Activated CD4-positive, alpha-beta T cell treated with anti-CD3 and anti-CD28 coated beads, Interleukin-2, amount 10 ng/mL, durations not matched to agents 7 days and 5 days (primary cell): ENCODE measurements at regions of chr1 and their contacts with region 1.

Region 1: GRCh38 chr1:175154629-175155472 is 37.7 kb downstream of the KIAA0040 start:
- DNase-seq: peak; percentile 81
- H3K4me3 Mint-ChIP-seq: no peak overlapping the region
- H3K27ac Mint-ChIP-seq: no peak overlapping the region
- H3K4me1 Mint-ChIP-seq: peaks cover 19% of the 10 kb centered on the region
- H3K27me3 Mint-ChIP-seq: peaks cover 34% of the 10 kb centered on the region

Region 2: DNA sequence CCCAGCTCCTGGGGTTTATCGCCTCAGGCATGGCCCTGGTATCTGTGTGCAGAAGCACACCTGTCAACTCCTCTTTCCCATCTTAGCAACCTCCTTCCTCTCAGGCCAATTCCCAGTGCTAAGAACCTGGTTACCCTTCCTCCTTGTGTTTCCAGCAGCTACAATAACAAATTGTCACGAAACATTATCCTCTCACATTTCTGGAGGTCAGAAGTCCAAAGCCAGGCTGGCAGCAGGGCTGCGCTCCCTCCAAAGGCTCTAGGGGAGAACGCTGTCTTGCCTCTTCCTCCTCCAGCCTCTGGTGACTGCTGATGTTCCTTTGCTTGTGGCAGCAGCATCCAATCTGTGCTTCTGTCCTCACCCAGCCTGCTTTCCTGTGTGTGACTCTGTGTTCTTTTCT is 120.9 kb before region 1 on chr1:
- CTCF ChIA-PET with region 1: interaction called, 11 read pairs
- POLR2A ChIA-PET with region 1: no interaction called
- DNase-seq: no peak
- H3K4me3 Mint-ChIP-seq: no peak overlapping the region
- H3K27ac Mint-ChIP-seq: no peak overlapping the region
- H3K4me1 Mint-ChIP-seq: peaks cover 11% of the 10 kb centered on the region
- H3K27me3 Mint-ChIP-seq: no peaks in the 10 kb centered on the region

Region 3: GRCh38 chr1:175169305-175170018 is 14.6 kb after region 1 on chr1:
- CTCF ChIA-PET with region 1: interaction called, 11 read pairs
- POLR2A ChIA-PET with region 1: no interaction called
- DNase-seq: no peak
- H3K4me3 Mint-ChIP-seq: no peak overlapping the region
- H3K27ac Mint-ChIP-seq: peak overlapping the region; percentile 16
- H3K4me1 Mint-ChIP-seq: peaks cover 46% of the 10 kb centered on the region
- H3K27me3 Mint-ChIP-seq: no peaks in the 10 kb centered on the region

Region 4: DNA sequence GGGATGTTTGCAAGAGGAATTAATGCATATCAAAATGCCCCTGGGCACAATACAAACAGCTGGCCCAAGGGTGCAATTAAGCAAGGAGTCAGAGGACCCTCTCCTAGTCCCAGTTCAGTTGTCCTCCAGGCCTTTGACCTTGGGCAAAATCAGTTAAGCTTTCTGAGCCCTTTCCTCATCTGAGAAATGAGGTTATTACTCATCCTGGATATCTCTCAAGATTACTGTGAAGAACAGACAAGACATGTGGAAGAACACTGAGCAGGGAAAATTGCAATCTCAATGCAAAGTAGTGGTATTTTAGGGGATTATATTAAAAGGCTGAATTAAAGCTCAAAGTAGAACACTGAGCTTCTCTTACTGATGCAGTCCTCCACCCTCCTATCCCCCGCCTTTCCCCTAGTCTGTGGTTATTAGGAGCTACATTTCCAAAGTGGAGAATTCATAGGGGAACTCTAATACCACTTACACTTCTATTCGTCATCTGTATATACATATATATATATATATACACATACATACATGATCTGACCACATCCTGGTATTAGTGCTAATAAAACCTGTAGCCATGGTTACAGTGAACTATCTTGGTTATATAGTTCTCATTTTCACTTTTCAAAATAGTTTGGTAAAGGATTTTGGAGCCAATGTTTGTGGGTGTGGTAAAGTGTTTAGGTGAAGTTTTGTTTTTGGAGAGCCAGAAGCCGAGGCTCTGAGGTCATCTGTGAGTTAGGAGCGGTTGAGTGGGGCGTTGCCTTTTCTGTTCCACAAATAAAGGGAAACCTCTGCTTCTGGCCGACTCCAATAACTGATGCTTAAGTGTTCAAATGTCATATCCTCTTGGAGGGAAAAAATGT is 19.7 kb after region 1 on chr1:
- CTCF ChIA-PET with region 1: interaction called, 10 read pairs
- POLR2A ChIA-PET with region 1: no interaction called
- DNase-seq: no peak
- H3K4me3 Mint-ChIP-seq: no peak overlapping the region
- H3K27ac Mint-ChIP-seq: no peak overlapping the region
- H3K4me1 Mint-ChIP-seq: peaks cover 67% of the 10 kb centered on the region
- H3K27me3 Mint-ChIP-seq: no peaks in the 10 kb centered on the region

Region 5: GRCh38 chr1:175188936-175189335 is 34.1 kb after region 1 on chr1:
- CTCF ChIA-PET with region 1: interaction called, 12 read pairs
- POLR2A ChIA-PET with region 1: interaction called, 4 read pairs
- DNase-seq: peak; percentile 68
- H3K4me3 Mint-ChIP-seq: peak overlapping the region; percentile 92
- H3K27ac Mint-ChIP-seq: peak overlapping the region; percentile 91
- H3K4me1 Mint-ChIP-seq: peaks cover 79% of the 10 kb centered on the region
- H3K27me3 Mint-ChIP-seq: no peaks in the 10 kb centered on the region

Region 6: GRCh38 chr1:175278737-175279122 is 123.9 kb after region 1 on chr1:
- CTCF ChIA-PET with region 1: no interaction called
- POLR2A ChIA-PET with region 1: no interaction called
- DNase-seq: no peak
- H3K4me3 Mint-ChIP-seq: no peak overlapping the region
- H3K27ac Mint-ChIP-seq: no peak overlapping the region
- H3K4me1 Mint-ChIP-seq: peaks cover 6% of the 10 kb centered on the region
- H3K27me3 Mint-ChIP-seq: peaks cover 4% of the 10 kb centered on the region

Region 7: DNA sequence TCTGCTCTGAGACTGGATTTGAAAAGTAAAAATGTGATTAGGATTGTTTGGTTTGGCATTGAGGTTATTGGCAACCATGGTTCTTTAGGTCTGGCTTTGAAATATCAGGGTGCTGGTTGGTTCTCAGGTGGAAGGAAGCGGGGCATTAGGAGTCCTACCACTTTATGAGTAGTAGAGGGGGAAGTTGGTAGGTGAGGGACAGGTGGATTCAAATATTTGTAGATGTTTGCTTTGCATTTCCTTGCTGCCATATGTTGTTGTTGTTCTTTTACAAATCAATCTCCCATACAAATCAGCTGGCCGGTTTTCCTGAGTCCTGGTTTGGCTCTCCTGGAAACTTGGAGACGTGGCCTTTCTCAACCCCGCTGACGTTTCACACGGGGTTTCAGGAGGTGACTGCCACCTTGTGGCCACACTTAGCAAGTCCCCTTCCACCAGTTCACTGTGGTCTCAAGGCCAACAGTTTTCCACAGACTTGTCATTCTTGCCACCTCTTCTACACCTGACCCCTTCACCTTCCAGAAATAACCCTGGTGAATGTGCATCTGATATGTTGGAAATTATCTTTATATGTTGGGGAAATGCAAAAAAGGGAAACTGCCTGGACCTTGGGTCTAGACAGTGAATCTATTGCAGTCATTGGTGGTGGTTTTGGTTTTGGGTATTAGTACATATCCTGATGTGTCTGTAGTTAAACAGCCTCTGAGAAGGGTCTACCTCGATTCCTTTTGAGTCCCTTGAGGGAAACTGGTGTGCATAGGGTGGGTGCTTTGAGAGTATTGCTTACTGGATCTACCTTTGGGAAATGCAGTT is 164.8 kb after region 1 on chr1:
- CTCF ChIA-PET with region 1: interaction called, 55 read pairs
- POLR2A ChIA-PET with region 1: no interaction called
- DNase-seq: peak; percentile 74
- H3K4me3 Mint-ChIP-seq: no peak overlapping the region
- H3K27ac Mint-ChIP-seq: no peak overlapping the region
- H3K4me1 Mint-ChIP-seq: peaks cover 10% of the 10 kb centered on the region
- H3K27me3 Mint-ChIP-seq: peaks cover 21% of the 10 kb centered on the region